Transverse colon (tissue), 4 donors: ENCODE measurements at regions of chr2 and their contacts with region 1.

Region 1: GRCh38 chr2:36287363-36288275 is 68.0 kb upstream of the CRIM1 start:
- DNase-seq: no peak
- H3K4me3 ChIP-seq: no peak overlapping the region
- H3K27ac ChIP-seq: no peak overlapping the region
- H3K4me1 ChIP-seq: no peaks in the 10 kb centered on the region
- H3K27me3 ChIP-seq: no peaks in the 10 kb centered on the region
- CTCF ChIP-seq: no peak
- EP300 ChIP-seq: no peak
- POLR2A ChIP-seq: no peak

Region 2: GRCh38 chr2:36266536-36267121 is 21.0 kb before region 1 on chr2:
- in situ Hi-C with region 1: no loop called
- intact Hi-C with region 1: loop called (anchors 1 kb)
- DNase-seq: no peak
- H3K4me3 ChIP-seq: no peak overlapping the region
- H3K27ac ChIP-seq: no peak overlapping the region
- H3K4me1 ChIP-seq: no peaks in the 10 kb centered on the region
- H3K27me3 ChIP-seq: no peaks in the 10 kb centered on the region
- CTCF ChIP-seq: no peak
- EP300 ChIP-seq: no peak
- POLR2A ChIP-seq: no peak

Region 3: GRCh38 chr2:36376319-36376765 is 88.7 kb after region 1 on chr2:
- in situ Hi-C with region 1: no loop called
- intact Hi-C with region 1: no loop called
- DNase-seq: peak; percentile 86
- H3K4me3 ChIP-seq: peak overlapping the region in 1 of 4 donors; percentile 3
- H3K27ac ChIP-seq: peak overlapping the region; percentile 70 to 82 (median 76)
- H3K4me1 ChIP-seq: peaks cover 67 to 85% (median 75%) of the 10 kb centered on the region in 4 donors
- H3K27me3 ChIP-seq: no peaks in the 10 kb centered on the region
- CTCF ChIP-seq: no peak
- EP300 ChIP-seq: no peak
- POLR2A ChIP-seq: no peak